GM12878 (cell line): ENCODE measurements at regions of chr6 and their contacts with region 1.

Region 1: DNA sequence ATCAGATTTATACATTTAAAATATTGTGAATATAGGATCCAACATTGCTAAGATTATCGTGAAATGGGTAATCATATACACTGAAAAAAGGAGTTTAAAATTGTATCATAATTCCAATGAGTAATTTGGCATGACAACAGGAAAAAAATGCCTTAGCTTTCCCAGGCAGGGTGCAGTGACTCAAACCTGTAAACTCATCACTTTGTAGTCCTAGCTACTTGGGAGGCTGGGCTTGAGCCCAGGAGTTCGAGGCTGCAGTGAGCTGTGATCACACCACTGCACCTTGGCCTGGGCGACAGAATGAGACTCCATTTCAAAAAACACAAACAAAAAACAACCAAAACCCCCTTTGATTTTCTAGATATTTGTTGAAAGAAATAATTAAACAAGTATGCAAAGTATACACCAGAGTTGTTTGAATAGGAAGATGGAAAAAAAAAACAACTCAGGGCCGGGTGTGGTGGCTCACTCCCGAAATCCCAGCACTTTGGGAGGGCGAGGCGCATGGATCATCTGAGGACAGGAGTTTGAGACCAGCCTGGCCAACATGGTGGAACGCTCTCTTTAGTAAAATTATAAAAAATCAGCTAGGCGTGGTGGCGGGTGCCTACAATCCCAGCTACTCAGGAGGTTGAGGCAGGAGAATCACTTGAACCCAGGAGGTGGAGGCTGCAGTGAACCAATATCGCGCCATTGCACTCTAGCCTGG is 98.7 kb downstream of the TRERF1 start:
- DNase-seq: no peak
- ATAC-seq: no peak
- H3K4me3 ChIP-seq: no peak overlapping the region
- H3K27ac ChIP-seq: no peak overlapping the region
- H3K4me1 ChIP-seq: no peaks in the 10 kb centered on the region
- H3K27me3 ChIP-seq: no peaks in the 10 kb centered on the region
- CTCF ChIP-seq: no peak
- EP300 ChIP-seq: no peak
- POLR2A ChIP-seq: no peak
- RAD21 ChIP-seq: no peak

Region 2: DNA sequence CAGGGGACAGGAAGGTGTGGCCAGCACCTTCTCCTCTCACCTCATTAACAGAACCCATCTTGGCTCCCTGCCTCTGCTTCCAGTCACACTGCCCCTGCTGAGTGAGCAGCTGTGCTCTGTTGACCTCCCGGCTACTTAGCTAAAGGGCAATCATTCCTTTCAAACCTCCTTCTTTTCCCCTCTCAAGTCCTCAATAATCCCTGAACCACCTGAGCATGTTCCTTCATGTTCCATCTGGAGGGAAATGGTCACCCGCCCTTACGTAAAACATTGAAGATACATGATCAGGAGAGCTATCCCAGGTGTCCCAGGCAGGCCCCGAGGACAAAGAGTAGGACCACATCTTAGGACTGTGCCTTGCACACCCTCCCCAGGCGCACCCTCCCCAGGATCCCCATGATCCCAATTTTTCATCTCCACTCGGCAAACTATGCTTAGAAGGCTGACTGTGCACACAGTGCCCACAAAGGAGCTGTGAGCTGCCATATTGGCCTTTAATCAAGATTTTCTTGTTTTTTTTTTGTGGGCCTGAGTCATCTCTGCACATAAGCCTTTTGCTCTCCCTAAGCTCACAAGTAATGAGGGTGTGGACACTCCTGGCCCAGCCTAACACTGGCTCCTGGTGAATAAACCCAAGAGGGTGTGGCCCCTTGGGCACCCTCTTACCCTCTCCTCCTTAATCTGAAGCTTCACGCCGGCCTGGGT is 113.5 kb before region 1 on chr6:
- CTCF ChIA-PET with region 1: no interaction called
- POLR2A ChIA-PET with region 1: no interaction called
- RAD21 ChIA-PET with region 1: no interaction called
- SMC1A ChIA-PET with region 1: no interaction called
- in situ Hi-C with region 1: no loop called
- intact Hi-C with region 1: no loop called
- DNase-seq: no peak
- ATAC-seq: no peak
- H3K4me3 ChIP-seq: no peak overlapping the region
- H3K27ac ChIP-seq: peak overlapping the region; percentile 17; the same call in 1 of the 2 replicates
- H3K4me1 ChIP-seq: peaks cover 36% of the 10 kb centered on the region
- H3K27me3 ChIP-seq: no peaks in the 10 kb centered on the region
- CTCF ChIP-seq: no peak
- EP300 ChIP-seq: no peak
- POLR2A ChIP-seq: no peak
- RAD21 ChIP-seq: no peak

Region 3: DNA sequence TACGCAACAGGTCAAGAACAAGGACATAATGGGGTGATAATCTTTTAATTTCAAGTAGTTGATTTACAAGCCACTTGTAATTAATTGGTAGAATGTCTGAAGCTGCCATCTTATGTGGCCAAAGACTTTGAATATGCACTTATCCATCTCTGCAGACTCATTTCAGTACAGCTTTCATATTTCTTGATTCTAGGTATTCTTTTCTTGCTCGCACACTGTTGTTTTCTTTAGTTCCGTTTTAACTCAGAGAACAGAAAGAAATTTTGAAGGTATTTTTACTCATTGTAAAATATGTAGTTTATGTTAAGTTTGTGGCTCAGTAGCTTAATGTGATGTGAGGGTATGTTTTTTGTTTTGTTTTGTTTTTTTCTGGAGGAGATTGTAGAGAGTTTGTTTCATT is 284.7 kb after region 1 on chr6:
- CTCF ChIA-PET with region 1: no interaction called
- POLR2A ChIA-PET with region 1: interaction called, 10 read pairs
- RAD21 ChIA-PET with region 1: no interaction called
- SMC1A ChIA-PET with region 1: no interaction called
- in situ Hi-C with region 1: no loop called
- intact Hi-C with region 1: no loop called
- DNase-seq: no peak
- ATAC-seq: no peak
- H3K4me3 ChIP-seq: no peak overlapping the region
- H3K27ac ChIP-seq: no peak overlapping the region; the same call in 1 of the 2 replicates
- H3K4me1 ChIP-seq: peaks cover 5% of the 10 kb centered on the region
- H3K27me3 ChIP-seq: no peaks in the 10 kb centered on the region
- CTCF ChIP-seq: no peak
- EP300 ChIP-seq: no peak
- POLR2A ChIP-seq: no peak
- RAD21 ChIP-seq: no peak